ENCODE measurements at regions of chr11 and their contacts with region 1.

Region 1: GRCh38 chr11:62905927-62906531 is 15.1 kb downstream of the CHRM1 start:
- DNase-seq: peak; percentile 84
- H3K4me3 Mint-ChIP-seq: no peak overlapping the region
- H3K27ac Mint-ChIP-seq: no peak overlapping the region
- H3K4me1 Mint-ChIP-seq: peaks cover 12% of the 10 kb centered on the region
- H3K27me3 Mint-ChIP-seq: peaks cover 55% of the 10 kb centered on the region
- CTCF ChIP-seq: peak; percentile 93

Region 2: DNA sequence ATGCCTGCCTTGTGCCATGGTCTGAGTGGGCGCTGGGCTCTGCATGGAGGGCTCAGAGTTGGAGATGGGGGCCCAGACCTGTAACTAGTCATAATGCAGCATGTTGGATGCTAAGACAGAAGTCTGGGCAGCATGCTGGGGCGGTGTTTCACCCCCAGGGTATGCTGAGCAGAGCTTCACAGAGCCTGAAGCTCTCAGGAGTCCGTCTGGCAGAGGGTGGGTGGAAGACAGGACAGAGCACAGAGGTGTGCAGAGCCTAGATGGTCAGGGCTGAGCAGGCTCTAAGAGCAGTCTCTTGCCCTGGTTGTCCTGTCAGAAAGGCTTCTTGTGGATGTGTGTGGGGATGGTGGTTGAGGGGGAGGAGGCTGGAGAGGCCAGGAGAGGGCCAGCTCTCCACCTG is 127.6 kb before region 1 on chr11:
- CTCF ChIA-PET with region 1: no interaction called
- intact Hi-C with region 1: no loop called
- DNase-seq: no peak
- H3K4me3 Mint-ChIP-seq: no peak overlapping the region
- H3K27ac Mint-ChIP-seq: no peak overlapping the region
- H3K4me1 Mint-ChIP-seq: no peaks in the 10 kb centered on the region
- H3K27me3 Mint-ChIP-seq: no peaks in the 10 kb centered on the region
- CTCF ChIP-seq: no peak

Region 3: DNA sequence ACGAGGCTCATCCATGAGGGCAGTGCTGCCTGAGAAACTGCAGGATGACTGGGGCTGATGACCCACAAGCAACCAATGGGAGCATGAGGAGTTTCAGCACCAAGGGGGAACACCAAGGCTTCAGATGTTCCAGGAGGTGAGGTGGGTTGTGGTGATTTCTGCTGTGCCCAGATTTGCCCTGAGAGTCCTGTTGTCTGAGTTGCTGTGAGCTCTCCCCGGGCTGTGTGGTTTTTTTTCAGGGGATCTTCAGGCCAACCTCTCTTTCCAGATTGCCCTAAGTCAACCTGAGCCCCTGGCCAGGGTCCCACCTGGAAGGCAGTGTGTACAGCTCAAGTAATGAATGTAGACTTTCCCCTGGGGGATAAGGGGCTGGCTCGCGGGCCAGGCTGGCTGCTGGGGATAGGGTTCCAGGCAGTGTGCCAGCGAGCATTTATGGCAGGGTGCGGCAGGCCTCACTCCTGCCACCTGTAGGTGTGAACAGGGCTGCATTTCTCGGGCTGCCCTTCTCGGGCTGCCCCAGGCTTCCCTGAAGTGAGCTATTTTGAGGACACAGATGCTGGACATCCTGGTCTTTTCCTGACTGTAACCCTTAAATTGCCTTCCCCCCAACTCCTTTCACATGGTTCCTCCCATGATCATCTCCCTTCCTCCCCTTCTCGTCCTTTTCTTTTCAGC is 69.0 kb after region 1 on chr11:
- CTCF ChIA-PET with region 1: interaction called, 27 read pairs
- intact Hi-C with region 1: loop called (anchors 1 kb)
- DNase-seq: peak; percentile 66
- H3K4me3 Mint-ChIP-seq: no peak overlapping the region
- H3K27ac Mint-ChIP-seq: no peak overlapping the region
- H3K4me1 Mint-ChIP-seq: no peaks in the 10 kb centered on the region
- H3K27me3 Mint-ChIP-seq: peaks cover 87% of the 10 kb centered on the region
- CTCF ChIP-seq: peak; percentile 48

Region 4: DNA sequence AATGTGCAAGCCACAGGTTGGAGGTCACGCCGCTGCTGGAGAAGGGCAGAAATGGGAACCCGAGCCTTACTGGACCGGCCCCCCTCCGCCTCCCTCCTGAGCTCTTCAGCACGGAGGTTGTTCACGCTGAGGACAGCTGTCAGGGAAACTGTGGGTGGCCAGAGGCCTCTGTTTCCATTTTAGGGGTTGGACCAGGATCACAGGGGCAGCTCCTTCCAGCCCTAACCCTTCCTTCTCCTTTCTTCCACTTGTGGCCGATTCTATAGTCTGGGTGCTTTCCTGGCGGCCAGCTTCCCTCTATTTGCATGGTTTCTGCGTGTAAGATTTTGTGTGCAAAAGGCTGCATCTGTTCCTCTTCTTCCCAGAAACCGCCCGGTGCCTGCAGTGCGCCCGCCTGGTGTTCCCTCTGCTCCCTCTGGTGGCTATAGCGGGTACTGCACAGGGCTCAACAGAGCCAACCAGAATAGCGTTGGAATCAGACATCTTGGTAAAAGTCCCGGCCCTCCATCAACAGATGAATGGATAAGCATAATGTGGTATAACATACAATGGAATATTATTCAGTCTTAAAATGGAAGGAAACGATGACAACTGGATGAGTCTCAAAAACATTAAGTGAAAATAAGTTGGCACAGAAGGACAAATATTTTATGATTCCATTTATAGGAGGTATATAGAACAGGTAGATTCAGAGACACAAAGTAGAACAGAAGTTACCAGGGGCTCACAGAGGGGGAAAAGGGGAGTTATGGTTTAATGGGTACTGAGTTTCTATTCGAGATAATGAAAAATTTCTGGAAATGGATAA is 118.0 kb after region 1 on chr11:
- CTCF ChIA-PET with region 1: interaction called, 35 read pairs
- intact Hi-C with region 1: loop called (anchors 1 kb)
- DNase-seq: peak; percentile 90
- H3K4me3 Mint-ChIP-seq: no peak overlapping the region
- H3K27ac Mint-ChIP-seq: no peak overlapping the region
- H3K4me1 Mint-ChIP-seq: no peaks in the 10 kb centered on the region
- H3K27me3 Mint-ChIP-seq: peaks cover 84% of the 10 kb centered on the region
- CTCF ChIP-seq: peak; percentile 98

Region 5: GRCh38 chr11:63212742-63213141 is 306.7 kb after region 1 on chr11:
- CTCF ChIA-PET with region 1: no interaction called
- intact Hi-C with region 1: loop called (anchors 5 kb)
- DNase-seq: peak; percentile 24
- H3K4me3 Mint-ChIP-seq: no peak overlapping the region
- H3K27ac Mint-ChIP-seq: no peak overlapping the region
- H3K4me1 Mint-ChIP-seq: no peaks in the 10 kb centered on the region
- H3K27me3 Mint-ChIP-seq: peaks cover 72% of the 10 kb centered on the region
- CTCF ChIP-seq: peak; percentile 34

Measured in Calu3 (cell line).